CD14-positive monocyte (primary cell): ENCODE measurements at regions of chr5 and their contacts with region 1.

Region 1: DNA sequence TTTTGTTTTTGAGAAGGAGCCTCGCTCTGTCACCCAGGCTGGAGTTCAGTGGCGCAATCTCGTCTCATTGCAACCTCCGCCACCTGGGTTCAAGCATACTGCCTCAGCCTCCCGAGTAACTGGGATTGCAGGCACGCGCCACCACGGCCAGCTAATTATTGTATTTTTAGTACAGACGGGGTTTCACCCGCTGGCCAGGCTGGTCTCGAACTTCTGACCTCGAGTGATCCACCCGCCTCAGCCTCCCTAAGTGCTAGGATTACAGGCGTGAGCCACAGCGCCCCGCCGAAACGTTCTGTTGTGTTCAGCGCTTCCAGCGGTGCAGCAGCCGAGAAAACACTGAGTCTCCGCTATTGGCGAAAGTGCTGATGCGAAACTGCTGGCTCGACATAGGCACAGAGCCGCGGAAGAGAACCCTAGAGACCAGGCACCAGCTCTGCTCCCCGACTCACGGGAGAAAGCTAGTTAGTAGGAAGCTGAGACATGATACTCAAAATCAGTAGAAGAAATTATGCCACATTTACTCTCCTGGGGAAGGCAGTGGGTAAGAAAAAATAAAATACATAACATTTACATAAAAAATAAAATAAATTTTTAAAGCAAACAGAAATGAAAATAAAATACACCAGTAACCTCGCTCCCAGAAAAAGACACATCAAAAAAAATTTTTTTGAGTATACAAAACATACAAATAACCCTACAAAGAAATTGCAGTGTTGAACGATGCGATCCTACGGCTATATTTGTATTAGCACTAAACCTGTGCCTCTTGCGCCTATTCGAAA is 31.6 kb downstream of the ANXA2R start:
- DNase-seq: peak; percentile 84 to 90 (median 89)
- H3K4me3 ChIP-seq: peak overlapping the region; percentile 58 to 96 (median 86)
- H3K4me3 Mint-ChIP-seq: peak overlapping the region; percentile 88 to 96
- H3K27ac ChIP-seq: peak overlapping the region; percentile 97
- H3K27ac Mint-ChIP-seq: peak overlapping the region; percentile 97 to 100 (median 99)
- H3K4me1 ChIP-seq: peaks cover 38 to 57% of the 10 kb centered on the region in 2 donors
- H3K4me1 Mint-ChIP-seq: peaks cover 40% of the 10 kb centered on the region
- H3K27me3 ChIP-seq: no peaks in the 10 kb centered on the region
- H3K27me3 Mint-ChIP-seq: peaks cover 0 to 2% (median 0%) of the 10 kb centered on the region in 3 donors
- CTCF ChIP-seq: no peak

Region 2: GRCh38 chr5:42970636-42971559 is 37.7 kb before region 1 on chr5:
- intact Hi-C with region 1: no loop called
- DNase-seq: no peak
- H3K4me3 ChIP-seq: no peak overlapping the region
- H3K4me3 Mint-ChIP-seq: no peak overlapping the region
- H3K27ac ChIP-seq: no peak overlapping the region
- H3K27ac Mint-ChIP-seq: no peak overlapping the region
- H3K4me1 ChIP-seq: no peaks in the 10 kb centered on the region
- H3K4me1 Mint-ChIP-seq: peaks cover 1% of the 10 kb centered on the region
- H3K27me3 ChIP-seq: no peaks in the 10 kb centered on the region
- H3K27me3 Mint-ChIP-seq: no peaks in the 10 kb centered on the region
- CTCF ChIP-seq: no peak

Region 3: DNA sequence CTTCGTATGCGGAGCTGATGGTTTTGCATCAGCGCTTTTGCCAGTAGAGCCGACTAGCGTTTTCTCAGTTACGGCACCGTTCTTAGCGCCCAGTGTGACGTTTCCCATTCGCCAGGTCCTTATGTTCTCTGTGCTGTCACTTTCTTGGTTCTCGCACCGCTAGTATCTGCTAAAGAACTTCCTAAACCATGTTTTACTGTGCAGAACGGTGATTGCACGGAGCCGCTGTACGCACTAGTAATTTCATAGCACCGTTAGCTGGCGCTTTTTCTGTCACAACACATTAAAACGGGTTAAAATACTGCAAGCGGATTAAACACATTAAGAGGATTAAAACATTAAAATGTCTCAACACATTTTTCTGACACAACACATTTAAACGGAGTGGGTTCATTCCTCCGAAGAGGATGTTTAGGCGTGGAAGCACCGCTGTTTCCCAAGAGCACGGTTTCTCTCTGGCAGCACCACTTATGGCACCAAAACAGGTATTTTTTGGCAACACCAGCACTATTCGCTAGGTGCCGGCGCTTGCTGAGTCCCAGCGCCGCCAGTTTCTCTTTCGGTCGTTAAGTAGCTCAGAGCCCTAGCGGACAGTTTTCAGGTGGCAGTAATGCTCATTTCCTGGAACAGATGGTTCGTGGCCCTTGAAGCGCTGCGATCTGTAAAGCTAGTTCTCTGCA is 11.2 kb after region 1 on chr5:
- intact Hi-C with region 1: loop called in 1 of 2 experiments (anchors 1 kb)
- DNase-seq: peak; percentile 84 to 90 (median 85)
- H3K4me3 ChIP-seq: peak overlapping the region; percentile 75 to 99 (median 80)
- H3K4me3 Mint-ChIP-seq: peak overlapping the region; percentile 95 to 97
- H3K27ac ChIP-seq: peak overlapping the region; percentile 97 to 99
- H3K27ac Mint-ChIP-seq: peak overlapping the region; percentile 96 to 100 (median 99)
- H3K4me1 ChIP-seq: peaks cover 16 to 18% of the 10 kb centered on the region in 2 donors
- H3K4me1 Mint-ChIP-seq: peaks cover 29% of the 10 kb centered on the region
- H3K27me3 ChIP-seq: no peaks in the 10 kb centered on the region
- H3K27me3 Mint-ChIP-seq: peaks cover 0 to 2% (median 0%) of the 10 kb centered on the region in 3 donors
- CTCF ChIP-seq: peak; percentile 62